HepG2 (cell line): ENCODE measurements at regions of chr11 and their contacts with region 1.

Region 1: DNA sequence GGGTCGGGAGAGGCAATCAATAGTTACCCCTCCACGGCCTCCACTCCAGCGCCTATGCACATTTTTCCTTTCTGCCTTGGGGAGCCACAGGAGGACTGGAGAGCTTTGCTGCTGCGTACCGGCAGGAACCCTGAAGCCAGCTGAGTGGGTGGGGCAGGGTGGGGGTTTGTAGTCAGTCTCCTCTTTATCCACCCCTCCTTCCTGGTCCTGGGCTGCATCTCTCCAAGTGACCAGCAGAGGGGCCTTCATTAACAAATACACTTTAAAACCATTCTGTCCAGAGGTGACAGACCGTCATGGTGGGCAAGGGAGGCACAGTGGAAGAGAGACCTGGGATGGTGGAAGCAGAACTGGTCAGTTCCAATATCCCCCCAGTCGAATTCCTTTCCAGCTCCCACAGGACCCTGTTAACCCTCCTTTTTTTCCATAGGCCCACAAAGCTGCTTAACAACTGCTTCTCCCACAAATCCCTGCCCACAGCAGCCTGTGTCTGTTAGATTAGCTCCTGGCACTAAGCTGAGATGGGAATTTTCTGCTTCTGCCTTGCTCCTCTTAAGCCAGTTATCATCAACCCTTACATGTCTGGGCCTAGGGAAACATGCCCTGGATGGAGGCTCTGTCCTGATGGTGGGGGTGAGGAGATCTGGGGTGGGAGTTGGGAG is 3.9 kb upstream of the ABCG4 start:
- DNase-seq: peak; percentile 77
- ATAC-seq: peak; percentile 90
- H3K4me3 ChIP-seq: no peak overlapping the region
- H3K27ac ChIP-seq: no peak overlapping the region
- H3K4me1 ChIP-seq: peaks cover 6% of the 10 kb centered on the region; the same call in 1 of the 2 replicates
- H3K27me3 ChIP-seq: peaks cover 10 to 33% of the 10 kb centered on the region in 2 experiments
- CTCF ChIP-seq: peak; percentile 75
- EP300 ChIP-seq: no peak
- POLR2A ChIP-seq: no peak
- RAD21 ChIP-seq: 0 out of 2 replicates have a peak, but pooled peaks have one; percentile 22

Region 2: DNA sequence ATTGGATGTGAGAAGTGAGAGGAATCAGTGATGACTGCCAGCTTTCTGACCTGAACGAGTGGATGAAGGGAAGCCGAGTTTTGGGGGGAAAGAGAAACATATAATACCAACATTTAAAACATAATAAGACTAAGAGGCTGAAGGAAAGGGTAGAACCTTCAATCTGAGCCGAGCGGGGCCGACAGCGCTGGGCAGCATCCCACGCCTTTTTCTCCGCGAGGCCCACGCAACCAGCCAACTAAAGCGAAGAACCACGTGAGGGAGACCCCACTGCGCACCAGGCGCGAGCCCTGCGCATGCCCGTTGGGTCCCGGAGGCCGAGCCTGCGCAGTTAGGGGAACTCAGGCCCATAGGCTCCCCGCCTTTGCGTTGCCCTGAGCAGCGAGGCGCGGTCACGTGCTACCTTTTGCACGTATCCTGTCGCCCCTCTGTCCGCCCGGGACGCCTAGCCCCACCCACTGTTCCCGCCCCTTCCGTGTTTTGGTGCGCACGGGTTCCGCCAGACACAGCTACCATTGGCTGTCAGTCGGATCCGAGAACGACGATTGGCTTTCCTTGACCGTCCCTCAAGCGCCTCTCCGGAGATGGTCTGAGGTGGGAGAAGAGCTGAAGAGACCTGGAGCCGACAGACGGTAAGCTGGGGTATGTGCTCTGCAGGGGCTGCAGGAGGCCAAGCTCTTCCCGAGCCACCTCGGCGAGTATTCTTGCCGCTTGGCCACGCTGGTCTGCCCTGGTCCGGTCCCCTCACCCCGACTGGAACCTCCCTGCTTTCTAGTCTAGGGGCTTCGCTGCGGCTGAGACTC is 23.7 kb before region 1 on chr11 and contains the start of gene HINFP:
- CTCF ChIA-PET with region 1: no interaction called
- POLR2A ChIA-PET with region 1: interaction called, 11 read pairs
- in situ Hi-C with region 1: no loop called
- intact Hi-C with region 1: no loop called
- DNase-seq: peak; percentile 97
- ATAC-seq: peak; percentile 98
- H3K4me3 ChIP-seq: peak within 1 kb of the TSS; percentile 81 to 98 (median 84)
- H3K27ac ChIP-seq: peak within 1 kb of the TSS; percentile 55
- H3K4me1 ChIP-seq: peaks cover 36% of the 10 kb centered on the region
- H3K27me3 ChIP-seq: no peaks in the 10 kb centered on the region; a peak in 1 of 5 replicates
- CTCF ChIP-seq: no peak; the same call in 1 of the 2 replicates
- EP300 ChIP-seq: no peak
- POLR2A ChIP-seq: peak; percentile 65 to 84
- RAD21 ChIP-seq: 0 out of 2 replicates have a peak, but pooled peaks have one; percentile 20
- total RNA-seq, gene HINFP: 13.3 and 15.1 TPM in 2 replicates

Region 3: GRCh38 chr11:119196833-119197483 is 52.0 kb after region 1 on chr11:
- CTCF ChIA-PET with region 1: interaction called, 25 read pairs
- POLR2A ChIA-PET with region 1: no interaction called
- in situ Hi-C with region 1: no loop called
- intact Hi-C with region 1: loop called (anchors 1 kb)
- DNase-seq: peak; percentile 83
- ATAC-seq: peak; percentile 82
- H3K4me3 ChIP-seq: no peak overlapping the region
- H3K27ac ChIP-seq: no peak overlapping the region
- H3K4me1 ChIP-seq: peaks cover 34% of the 10 kb centered on the region
- H3K27me3 ChIP-seq: peaks cover 3 to 8% of the 10 kb centered on the region in 2 experiments; a peak in 2 of 5 replicates
- CTCF ChIP-seq: peak; percentile 86
- EP300 ChIP-seq: no peak
- POLR2A ChIP-seq: no peak
- RAD21 ChIP-seq: peak; percentile 78